ENCODE measurements at regions of chr18 and their contacts with region 1.

Region 1: DNA sequence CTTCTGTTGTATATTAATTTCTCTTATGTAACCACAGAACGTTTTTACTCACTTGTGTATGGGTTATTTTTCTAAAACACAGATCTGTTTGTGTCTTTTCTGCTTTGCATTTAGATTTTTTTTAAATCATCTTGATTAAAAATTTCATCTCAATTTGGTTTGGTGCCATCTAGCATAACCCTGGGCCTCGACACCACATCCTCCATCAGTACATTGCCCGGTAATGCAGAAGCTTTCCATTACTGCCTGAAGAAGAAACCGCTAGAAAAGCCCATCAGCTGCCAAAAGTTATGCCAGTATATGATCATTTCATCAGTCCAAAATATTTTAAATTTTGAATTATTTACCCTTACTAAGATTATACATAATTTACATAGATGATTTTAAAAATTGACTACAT is 26.2 kb downstream of the MAPRE2 start:
- DNase-seq: no peak
- H3K4me3 ChIP-seq: no peak overlapping the region
- H3K27ac ChIP-seq: no peak overlapping the region
- H3K4me1 ChIP-seq: peaks cover 0 to 12% (median 0%) of the 10 kb centered on the region in 4 donors
- H3K27me3 ChIP-seq: no peaks in the 10 kb centered on the region
- CTCF ChIP-seq: no peak
- EP300 ChIP-seq: no peak
- POLR2A ChIP-seq: no peak

Region 2: DNA sequence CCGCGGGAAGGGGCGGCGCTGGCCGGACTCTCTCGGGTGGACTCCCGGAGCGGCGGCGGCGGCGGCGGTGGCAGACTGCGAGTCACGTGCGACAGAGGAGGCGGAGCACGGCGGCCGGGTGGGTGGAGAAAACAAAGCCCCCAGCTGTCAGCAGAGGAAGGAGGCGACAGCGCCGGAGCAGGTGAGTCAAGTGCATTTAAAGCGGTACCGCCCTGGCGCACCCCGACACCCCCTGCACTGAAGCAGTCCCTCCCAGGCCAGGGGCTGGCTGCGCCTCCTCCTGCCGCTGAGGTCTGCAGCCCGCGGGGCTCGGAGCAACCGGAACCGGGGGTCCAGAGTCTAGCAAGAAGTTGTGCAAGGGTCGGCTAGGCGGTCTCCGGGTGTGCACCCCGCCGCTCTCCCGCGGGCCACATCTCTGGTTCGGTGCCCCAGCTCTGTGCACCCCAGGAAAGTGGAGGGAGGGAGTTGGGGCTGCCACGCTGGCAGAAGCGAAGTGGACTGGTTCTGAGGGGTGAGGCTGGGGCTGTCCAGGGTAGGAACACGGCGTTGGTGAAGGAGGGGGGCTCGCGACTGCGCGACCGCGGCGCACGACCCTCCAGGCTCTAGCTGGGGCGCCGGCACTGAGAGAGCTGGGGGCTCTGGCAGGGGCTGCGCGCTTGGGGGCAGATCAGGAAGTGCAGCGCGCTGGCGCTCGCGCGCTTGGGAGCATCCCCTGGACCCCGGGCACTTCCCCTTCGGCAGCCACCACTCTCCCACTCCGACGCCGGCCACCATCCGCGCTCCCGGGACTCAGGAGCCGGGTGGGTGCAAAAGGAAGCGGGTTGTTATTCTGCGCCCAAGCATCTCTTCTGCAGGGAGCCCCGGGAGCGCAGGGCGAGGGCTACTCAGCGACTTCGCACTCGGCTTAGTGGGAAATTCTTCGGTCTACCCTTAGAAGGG is 90.3 kb before region 1 on chr18:
- in situ Hi-C with region 1: no loop called
- intact Hi-C with region 1: no loop called
- DNase-seq: peak; percentile 93
- H3K4me3 ChIP-seq: peak overlapping the region; percentile 71 to 92 (median 84)
- H3K27ac ChIP-seq: peak overlapping the region; percentile 82 to 92 (median 87)
- H3K4me1 ChIP-seq: peaks cover 0 to 23% (median 7%) of the 10 kb centered on the region in 4 donors
- H3K27me3 ChIP-seq: no peaks in the 10 kb centered on the region
- CTCF ChIP-seq: no peak
- EP300 ChIP-seq: no peak
- POLR2A ChIP-seq: peak; percentile 66

Region 3: DNA sequence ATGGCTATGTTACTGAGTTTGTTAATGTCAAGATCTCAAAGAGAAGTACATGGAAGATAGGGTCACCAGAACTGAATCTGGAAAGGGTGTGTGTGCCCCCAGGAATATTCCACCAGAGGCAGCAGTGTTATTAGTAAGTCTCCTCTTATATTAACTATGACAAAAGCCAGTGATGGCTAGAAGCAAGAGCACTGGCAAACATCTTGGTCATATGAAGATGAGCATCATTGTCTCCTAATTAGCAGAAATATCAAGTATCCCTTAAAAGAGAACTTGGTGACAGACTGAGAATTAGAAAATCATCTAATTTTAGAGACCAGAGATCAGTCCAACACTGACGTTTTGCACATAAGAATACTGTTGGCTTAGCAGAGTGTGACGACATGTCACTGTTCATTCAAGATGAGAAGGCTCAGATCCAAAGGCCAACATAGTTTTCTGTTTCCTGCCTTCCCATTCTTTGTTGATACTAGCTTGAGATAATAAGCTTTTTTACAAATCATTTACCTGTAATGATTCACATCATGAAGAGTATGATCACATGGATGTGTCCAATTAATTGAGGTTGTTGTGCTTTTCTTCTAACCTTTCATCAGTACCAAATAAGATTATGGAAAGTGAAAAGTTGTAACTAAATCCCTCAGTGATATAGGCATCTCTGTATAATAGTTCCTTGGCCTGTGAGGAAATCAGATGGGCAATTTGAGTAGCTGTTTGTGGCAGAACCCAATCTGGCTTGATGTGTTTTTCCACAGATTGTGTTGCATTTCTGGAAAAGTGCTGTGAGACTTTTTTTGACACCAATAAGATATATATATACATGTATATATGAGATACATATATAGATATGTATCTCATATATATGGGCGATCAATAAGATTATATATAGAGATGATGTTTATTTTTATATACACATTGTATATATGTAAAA is 18.3 kb after region 1 on chr18:
- in situ Hi-C with region 1: no loop called
- intact Hi-C with region 1: no loop called
- DNase-seq: no peak
- H3K4me3 ChIP-seq: no peak overlapping the region
- H3K27ac ChIP-seq: no peak overlapping the region
- H3K4me1 ChIP-seq: peaks cover 0 to 21% (median 5%) of the 10 kb centered on the region in 4 donors
- H3K27me3 ChIP-seq: no peaks in the 10 kb centered on the region
- CTCF ChIP-seq: no peak
- EP300 ChIP-seq: no peak
- POLR2A ChIP-seq: no peak

Region 4: GRCh38 chr18:35580701-35581539 is 513.5 kb after region 1 on chr18:
- in situ Hi-C with region 1: no loop called
- intact Hi-C with region 1: loop called (anchors 5 kb)
- DNase-seq: peak; percentile 60
- H3K4me3 ChIP-seq: peak overlapping the region; percentile 41 to 92 (median 80)
- H3K27ac ChIP-seq: peak overlapping the region; percentile 91 to 98 (median 96)
- H3K4me1 ChIP-seq: peaks cover 0 to 43% (median 40%) of the 10 kb centered on the region in 4 donors
- H3K27me3 ChIP-seq: no peaks in the 10 kb centered on the region
- CTCF ChIP-seq: no peak
- EP300 ChIP-seq: no peak
- POLR2A ChIP-seq: no peak